ENCODE measurements at regions of chr17 and their contacts with region 1.

Region 1: GRCh38 chr17:79413611-79414010 is 197.2 kb downstream of the RBFOX3 start:
- DNase-seq: no peak

Region 2: DNA sequence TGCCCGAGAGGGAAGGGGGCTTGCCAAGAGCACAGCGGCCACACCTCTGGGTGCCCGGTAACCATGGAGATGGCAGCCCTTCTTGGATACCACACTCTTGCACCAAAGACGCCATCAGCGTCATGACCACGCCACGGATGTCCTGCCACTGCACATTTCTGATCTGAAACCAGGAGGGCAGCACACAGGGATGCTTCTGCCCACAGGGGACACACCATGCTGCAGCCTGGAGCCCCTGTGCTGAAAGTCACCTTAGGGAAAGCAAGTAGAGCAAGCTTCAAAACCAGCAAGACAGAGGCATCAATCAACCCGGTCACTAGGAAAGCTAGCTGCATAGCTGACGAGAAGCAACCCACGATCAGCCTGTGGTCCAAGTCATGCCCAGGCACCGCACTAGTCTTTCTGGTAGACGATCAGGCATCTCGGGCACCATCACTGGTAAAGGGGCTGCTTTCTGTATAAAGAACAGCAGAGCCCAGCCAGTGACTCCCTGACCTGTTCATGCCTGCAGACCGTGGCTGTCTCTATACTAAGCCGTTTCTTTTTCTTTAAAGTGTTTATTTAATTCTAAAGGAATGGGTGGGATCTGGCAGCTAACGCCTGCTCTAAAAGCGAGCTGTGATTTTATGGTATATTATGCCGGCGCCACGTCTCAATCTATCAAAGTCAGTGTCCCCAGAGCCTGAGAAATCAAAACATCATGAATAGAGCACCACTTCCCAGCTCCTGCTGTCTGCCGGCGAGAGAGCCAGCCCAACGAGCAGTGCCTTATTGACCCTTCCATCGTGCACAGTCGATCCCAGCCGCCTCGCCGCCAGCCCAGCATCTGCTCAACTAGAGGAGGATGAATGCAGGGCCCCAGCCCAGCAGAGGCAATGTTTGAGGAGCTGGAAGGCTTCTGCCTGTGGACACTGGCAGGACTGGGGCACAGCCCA is 47.5 kb before region 1 on chr17:
- intact Hi-C with region 1: no loop called
- DNase-seq: no peak

Region 3: DNA sequence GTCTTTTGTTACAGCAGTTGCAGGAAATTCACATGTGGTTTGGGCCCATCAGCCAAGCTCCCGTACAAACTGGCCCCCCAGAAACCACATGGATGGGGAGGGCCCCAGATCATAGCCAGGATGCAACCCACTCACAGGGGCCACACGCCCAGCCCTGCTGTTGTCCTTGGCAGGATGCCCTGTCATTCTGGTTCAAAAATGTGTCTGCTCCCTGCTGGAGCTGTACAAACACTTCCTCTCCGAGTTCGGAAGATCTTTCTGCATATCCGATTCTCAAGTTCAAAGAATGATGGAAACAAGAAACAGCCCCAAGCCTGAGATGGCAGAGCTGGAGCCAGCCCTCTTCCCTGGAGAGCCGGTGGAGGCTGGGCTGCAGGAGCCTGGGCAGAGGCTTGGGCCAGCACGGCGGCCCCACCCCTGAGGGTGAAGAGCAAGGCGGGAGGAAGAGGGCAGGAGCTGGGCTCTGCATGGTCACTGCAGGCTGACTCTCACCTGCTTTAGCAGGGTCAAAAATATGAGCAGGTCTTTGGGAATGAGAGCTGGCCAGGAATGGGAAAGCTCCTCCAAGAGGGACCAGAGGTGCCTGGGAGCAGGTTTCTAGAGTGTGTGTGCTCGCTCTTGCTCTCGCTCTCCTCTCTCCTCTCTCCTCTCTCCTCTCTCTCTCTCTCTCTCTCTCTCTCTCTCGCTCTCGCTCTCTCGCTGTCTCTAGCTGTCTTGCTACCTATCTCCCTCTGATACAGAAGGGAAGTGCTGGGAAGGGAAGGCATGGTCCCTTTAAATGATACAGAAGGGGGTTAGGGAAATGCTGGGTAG is 282.4 kb after region 1 on chr17:
- intact Hi-C with region 1: loop called in 1 of 2 experiments (anchors 10 kb)
- DNase-seq: no peak

Measured in posterior vena cava (tissue), 2 donors.